ENCODE measurements at regions of chr16 and their contacts with region 1.

Region 1: GRCh38 chr16:21300309-21301167 is 22.4 kb upstream of the CRYM start:
- DNase-seq: peak; percentile 98
- H3K4me3 Mint-ChIP-seq: peak overlapping the region; percentile 95
- H3K27ac Mint-ChIP-seq: peak overlapping the region; percentile 89
- H3K4me1 Mint-ChIP-seq: peaks cover 21% of the 10 kb centered on the region
- H3K27me3 Mint-ChIP-seq: no peaks in the 10 kb centered on the region
- CTCF ChIP-seq: peak; percentile 74

Region 2: DNA sequence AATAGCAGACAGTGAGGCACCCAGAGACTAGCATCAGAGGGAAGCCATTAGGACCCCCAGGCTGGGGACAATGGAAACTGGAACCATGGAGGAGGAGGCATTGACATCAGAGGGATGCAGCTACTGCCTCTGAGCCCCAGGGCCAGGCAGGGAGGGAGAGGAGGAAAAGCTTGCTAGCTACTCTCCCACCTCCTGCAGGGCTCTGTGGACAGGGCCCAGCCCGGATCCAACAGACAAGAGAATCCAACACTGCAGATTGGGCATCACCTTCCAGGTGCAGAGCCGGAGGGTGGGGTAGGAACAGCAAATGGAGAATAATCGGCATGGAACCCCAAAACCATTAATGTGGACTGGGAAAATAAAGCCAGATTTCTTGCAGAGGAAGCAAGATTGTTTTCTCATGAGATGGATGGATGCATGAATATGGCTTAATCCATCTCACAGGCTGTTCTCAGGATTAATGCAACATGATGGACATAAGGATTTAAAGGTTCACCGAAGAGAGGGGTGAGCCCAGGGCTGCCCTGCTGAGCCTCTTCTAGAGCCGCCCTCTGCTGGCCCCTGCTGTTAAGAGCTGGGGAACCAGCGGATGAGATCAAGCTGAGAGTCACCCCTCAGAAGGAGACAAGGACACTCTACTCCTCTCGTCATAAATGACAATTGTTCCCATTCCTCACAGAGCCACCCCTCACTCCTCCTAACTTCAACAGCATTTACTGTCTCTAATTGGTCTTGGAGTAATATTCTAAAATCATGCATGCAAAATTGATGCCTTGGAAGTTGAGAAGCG is 198.7 kb before region 1 on chr16:
- CTCF ChIA-PET with region 1: interaction called, 13 read pairs
- intact Hi-C with region 1: no loop called
- DNase-seq: peak; percentile 61
- H3K4me3 Mint-ChIP-seq: no peak overlapping the region
- H3K27ac Mint-ChIP-seq: no peak overlapping the region
- H3K4me1 Mint-ChIP-seq: peaks cover 14% of the 10 kb centered on the region
- H3K27me3 Mint-ChIP-seq: peaks cover 41% of the 10 kb centered on the region
- CTCF ChIP-seq: peak; percentile 47

Region 3: GRCh38 chr16:21184834-21185233 is 115.7 kb before region 1 on chr16:
- CTCF ChIA-PET with region 1: interaction called, 148 read pairs
- intact Hi-C with region 1: loop called (anchors 1 kb)
- DNase-seq: no peak
- H3K4me3 Mint-ChIP-seq: no peak overlapping the region
- H3K27ac Mint-ChIP-seq: no peak overlapping the region
- H3K4me1 Mint-ChIP-seq: peaks cover 8% of the 10 kb centered on the region
- H3K27me3 Mint-ChIP-seq: no peaks in the 10 kb centered on the region
- CTCF ChIP-seq: no peak

Region 4: GRCh38 chr16:21283521-21284289 is 16.8 kb before region 1 on chr16:
- CTCF ChIA-PET with region 1: interaction called, 14 read pairs
- intact Hi-C with region 1: no loop called
- DNase-seq: peak; percentile 65
- H3K4me3 Mint-ChIP-seq: peak overlapping the region; percentile 72
- H3K27ac Mint-ChIP-seq: no peak overlapping the region
- H3K4me1 Mint-ChIP-seq: peaks cover 16% of the 10 kb centered on the region
- H3K27me3 Mint-ChIP-seq: peaks cover 47% of the 10 kb centered on the region
- CTCF ChIP-seq: peak; percentile 55